Right ventricle myocardium superior (tissue), 1 donor: ENCODE measurements at regions of chr5 and their contacts with region 1.

Region 1: GRCh38 chr5:139251281-139251687 is 42.3 kb upstream of the MATR3 start:
- DNase-seq: no peak
- ATAC-seq: no peak

Region 2: DNA sequence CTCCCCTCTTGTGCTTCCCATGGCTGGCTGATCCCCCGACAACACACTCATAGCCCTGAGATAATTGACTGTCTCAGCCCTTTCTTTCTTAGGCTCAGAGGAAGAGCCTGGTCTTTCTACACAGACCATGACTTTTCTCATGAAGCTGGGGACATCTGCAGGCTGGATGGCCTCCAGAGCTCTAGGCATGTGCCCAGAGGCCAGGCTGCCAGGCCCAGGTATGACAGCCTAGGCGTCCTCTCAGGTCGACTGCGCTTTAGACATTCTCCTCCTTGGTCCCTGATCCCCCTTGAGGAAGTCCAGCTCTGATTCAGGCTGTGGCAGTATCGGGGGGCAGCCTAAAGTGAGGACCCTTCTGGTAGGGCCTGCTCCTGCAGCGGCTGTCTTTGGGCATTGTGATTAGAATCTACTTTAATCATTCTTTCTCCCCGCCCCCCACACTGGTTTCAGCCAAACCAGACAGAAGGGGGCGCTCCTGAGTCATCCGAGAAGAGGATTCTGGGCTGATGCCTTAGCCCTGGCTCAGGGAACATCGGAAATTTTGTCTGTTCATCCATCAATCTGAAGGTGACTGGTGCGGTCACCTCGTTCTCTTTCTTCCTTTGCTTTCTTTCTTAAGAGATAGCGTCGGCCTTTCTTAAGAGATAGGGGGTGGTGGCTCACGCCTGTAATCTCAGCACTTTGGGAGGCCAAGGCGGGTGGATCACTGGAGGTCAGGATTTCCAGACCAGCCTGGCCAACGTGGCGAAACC is 609.6 kb before region 1 on chr5:
- intact Hi-C with region 1: loop called (anchors 10 kb)
- DNase-seq: peak; percentile 80
- ATAC-seq: peak; percentile 80

Region 3: GRCh38 chr5:140502834-140503233 is 1251.5 kb after region 1 on chr5:
- intact Hi-C with region 1: no loop called
- DNase-seq: no peak
- ATAC-seq: no peak